Naive thymus-derived CD4-positive, alpha-beta T cell (primary cell): ENCODE measurements at regions of chr19 and their contacts with region 1.

Region 1: GRCh38 chr19:45405435-45406225 is 761 bp upstream of the PPP1R13L start:
- DNase-seq: peak; percentile 62 to 88 (median 81)
- ATAC-seq: peak; percentile 75
- H3K4me3 ChIP-seq: peak overlapping the region; percentile 77
- H3K4me3 Mint-ChIP-seq: peak overlapping the region; percentile 91 to 99 (median 97)
- H3K27ac ChIP-seq: peak overlapping the region; percentile 71
- H3K27ac Mint-ChIP-seq: peak overlapping the region; percentile 90 to 99 (median 94)
- H3K4me1 ChIP-seq: peaks cover 16 to 25% of the 10 kb centered on the region in 2 donors
- H3K4me1 Mint-ChIP-seq: peaks cover 28 to 53% (median 32%) of the 10 kb centered on the region in 7 donors
- H3K27me3 ChIP-seq: peaks cover 10 to 18% of the 10 kb centered on the region in 2 donors
- H3K27me3 Mint-ChIP-seq: peaks cover 15 to 27% (median 21%) of the 10 kb centered on the region in 5 donors

Region 2: DNA sequence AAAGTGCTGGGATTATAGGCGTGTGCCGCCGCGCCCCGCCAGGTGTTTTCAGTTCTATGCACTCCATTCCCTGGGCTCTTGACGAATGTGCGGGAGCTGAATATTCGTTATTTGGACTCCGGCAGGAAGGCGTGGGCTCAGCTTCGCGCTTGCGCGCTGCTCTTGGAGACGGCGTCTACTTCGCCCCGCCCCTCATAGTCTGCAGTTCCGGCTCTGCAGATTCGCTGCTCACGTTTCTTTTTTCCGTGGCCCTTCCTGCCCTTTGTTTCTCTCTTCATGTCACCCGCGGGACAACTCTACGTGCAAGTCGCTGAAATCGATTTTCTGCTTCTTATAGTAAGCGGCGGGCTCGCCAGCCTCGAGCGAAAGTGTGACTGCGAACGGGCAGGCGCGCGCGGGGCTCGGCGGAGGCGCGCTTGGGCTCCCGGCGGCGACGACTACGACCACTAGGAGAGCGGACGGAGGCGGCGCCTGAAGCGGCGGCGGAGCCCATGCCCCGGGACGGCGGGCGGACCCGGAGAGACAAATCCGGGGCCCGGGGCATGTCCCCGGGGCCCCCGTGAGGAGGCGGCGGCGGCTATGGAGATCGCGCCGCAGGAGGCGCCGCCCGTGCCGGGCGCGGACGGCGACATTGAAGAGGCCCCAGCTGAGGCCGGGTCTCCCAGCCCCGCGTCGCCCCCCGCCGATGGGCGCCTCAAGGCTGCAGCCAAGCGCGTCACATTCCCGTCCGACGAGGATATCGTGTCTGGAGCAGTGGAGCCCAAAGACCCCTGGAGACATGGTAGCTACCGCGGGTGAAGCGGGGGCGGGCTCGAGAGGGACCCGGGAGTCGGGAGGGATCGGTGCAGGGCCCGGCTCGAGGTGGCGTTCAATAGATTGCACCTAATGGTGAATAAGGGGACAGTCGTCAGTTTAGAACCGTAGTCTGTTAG is 312.6 kb before region 1 on chr19 and contains the start of gene PPP1R37:
- CTCF ChIA-PET with region 1: no interaction called
- POLR2A ChIA-PET with region 1: no interaction called
- intact Hi-C with region 1: loop called in 1 of 2 experiments (anchors 1 kb)
- DNase-seq: peak; percentile 81 to 97 (median 92)
- ATAC-seq: peak; percentile 85
- H3K4me3 ChIP-seq: peak within 1 kb of the TSS; percentile 75
- H3K4me3 Mint-ChIP-seq: peak within 1 kb of the TSS; percentile 87 to 99 (median 96)
- H3K27ac ChIP-seq: peak within 1 kb of the TSS; percentile 90
- H3K27ac Mint-ChIP-seq: peak within 1 kb of the TSS; percentile 96 to 100 (median 98)
- H3K4me1 ChIP-seq: peaks cover 33 to 46% of the 10 kb centered on the region in 2 donors
- H3K4me1 Mint-ChIP-seq: peaks cover 56 to 81% (median 60%) of the 10 kb centered on the region in 7 donors
- H3K27me3 ChIP-seq: no peaks in the 10 kb centered on the region
- H3K27me3 Mint-ChIP-seq: no peaks in the 10 kb centered on the region
- total RNA-seq, gene PPP1R37: 20.0 to 28.3 (median 21.9) TPM

Region 3: GRCh38 chr19:45423589-45424190 is 18.1 kb after region 1 on chr19 and contains the start of gene ERCC1:
- CTCF ChIA-PET with region 1: no interaction called
- POLR2A ChIA-PET with region 1: interaction called, 3 read pairs
- intact Hi-C with region 1: loop called (anchors 1 kb)
- DNase-seq: peak in 7 of 9 donors; percentile 25 to 83 (median 52)
- ATAC-seq: peak; percentile 71
- H3K4me3 ChIP-seq: peak within 1 kb of the TSS; percentile 72
- H3K4me3 Mint-ChIP-seq: peak within 1 kb of the TSS; percentile 88 to 100 (median 94)
- H3K27ac ChIP-seq: peak within 1 kb of the TSS; percentile 77
- H3K27ac Mint-ChIP-seq: peak within 1 kb of the TSS; percentile 83 to 97 (median 91)
- H3K4me1 ChIP-seq: peaks cover 24 to 28% of the 10 kb centered on the region in 2 donors
- H3K4me1 Mint-ChIP-seq: peaks cover 22 to 57% (median 50%) of the 10 kb centered on the region in 7 donors
- H3K27me3 ChIP-seq: peaks cover 0 to 3% of the 10 kb centered on the region in 2 donors
- H3K27me3 Mint-ChIP-seq: peaks cover 0 to 10% (median 3%) of the 10 kb centered on the region in 5 donors
- total RNA-seq, gene ERCC1: 45.1 to 88.2 (median 53.4) TPM

Region 4: DNA sequence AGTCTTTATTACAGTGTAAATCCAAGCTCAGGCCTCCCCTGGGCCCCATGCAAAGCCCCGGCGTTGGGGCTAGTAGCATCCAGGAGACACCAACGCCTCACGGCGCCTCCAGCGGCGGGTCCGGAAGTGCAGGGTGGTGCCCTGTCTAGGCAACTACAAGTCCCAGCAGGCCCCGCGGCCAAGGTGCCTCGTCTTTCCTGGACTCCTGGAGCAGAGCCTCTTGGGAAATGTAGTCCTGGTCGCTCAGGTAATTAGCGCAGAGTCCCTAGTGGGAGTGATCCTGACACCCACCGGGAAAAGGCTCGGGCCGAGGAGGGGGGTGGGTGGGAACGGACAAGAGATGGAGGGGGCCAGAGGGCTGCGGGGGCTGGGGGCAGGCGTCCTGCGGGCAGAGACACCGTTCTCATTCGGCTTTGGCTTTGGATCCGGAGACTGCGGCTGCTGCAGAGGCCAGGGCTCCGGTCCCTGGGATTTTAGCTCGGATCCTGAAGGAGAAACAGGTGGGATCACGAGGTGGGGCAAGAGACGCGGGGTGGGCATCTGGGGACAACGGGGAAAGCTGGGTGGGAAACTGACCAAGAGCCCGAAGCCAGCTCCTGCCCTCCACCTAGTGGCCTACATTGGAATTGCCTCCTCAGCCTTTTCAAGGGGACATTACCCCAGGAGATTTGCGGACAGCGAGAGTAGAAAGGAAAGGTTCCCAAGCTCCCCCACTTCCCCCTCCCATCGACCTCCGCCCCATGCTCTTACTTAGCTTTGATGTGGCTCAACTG is 79.9 kb after region 1 on chr19:
- CTCF ChIA-PET with region 1: interaction called, 4 read pairs
- POLR2A ChIA-PET with region 1: no interaction called
- intact Hi-C with region 1: loop called (anchors 1 kb)
- DNase-seq: peak; percentile 91 to 98 (median 95)
- ATAC-seq: peak; percentile 99
- H3K4me3 ChIP-seq: peak overlapping the region; percentile 85
- H3K4me3 Mint-ChIP-seq: peak overlapping the region; percentile 83 to 96 (median 90)
- H3K27ac ChIP-seq: peak overlapping the region; percentile 60
- H3K27ac Mint-ChIP-seq: peak overlapping the region in 8 of 9 donors; percentile 34 to 88 (median 82)
- H3K4me1 ChIP-seq: peaks cover 0 to 4% of the 10 kb centered on the region in 2 donors
- H3K4me1 Mint-ChIP-seq: peaks cover 0 to 13% (median 5%) of the 10 kb centered on the region in 7 donors
- H3K27me3 ChIP-seq: no peaks in the 10 kb centered on the region
- H3K27me3 Mint-ChIP-seq: peaks cover 0 to 7% (median 0%) of the 10 kb centered on the region in 5 donors

Region 5: GRCh38 chr19:45717166-45717982 is 311.7 kb after region 1 on chr19:
- CTCF ChIA-PET with region 1: no interaction called
- POLR2A ChIA-PET with region 1: interaction called, 3 read pairs
- intact Hi-C with region 1: loop called (anchors 1 kb)
- DNase-seq: peak; percentile 92 to 99 (median 98)
- ATAC-seq: peak; percentile 98
- H3K4me3 ChIP-seq: peak overlapping the region; percentile 80
- H3K4me3 Mint-ChIP-seq: peak overlapping the region; percentile 89 to 99 (median 95)
- H3K27ac ChIP-seq: peak overlapping the region; percentile 89
- H3K27ac Mint-ChIP-seq: peak overlapping the region; percentile 88 to 97 (median 96)
- H3K4me1 ChIP-seq: peaks cover 17 to 26% of the 10 kb centered on the region in 2 donors
- H3K4me1 Mint-ChIP-seq: peaks cover 26 to 55% (median 38%) of the 10 kb centered on the region in 7 donors
- H3K27me3 ChIP-seq: no peaks in the 10 kb centered on the region
- H3K27me3 Mint-ChIP-seq: no peaks in the 10 kb centered on the region

Region 6: GRCh38 chr19:45848922-45849321 is 443.3 kb after region 1 on chr19:
- CTCF ChIA-PET with region 1: no interaction called
- POLR2A ChIA-PET with region 1: no interaction called
- intact Hi-C with region 1: no loop called
- DNase-seq: no peak
- ATAC-seq: no peak
- H3K4me3 ChIP-seq: no peak overlapping the region
- H3K4me3 Mint-ChIP-seq: no peak overlapping the region
- H3K27ac ChIP-seq: no peak overlapping the region
- H3K27ac Mint-ChIP-seq: no peak overlapping the region
- H3K4me1 ChIP-seq: no peaks in the 10 kb centered on the region
- H3K4me1 Mint-ChIP-seq: peaks cover 0 to 8% (median 4%) of the 10 kb centered on the region in 7 donors
- H3K27me3 ChIP-seq: no peaks in the 10 kb centered on the region
- H3K27me3 Mint-ChIP-seq: no peaks in the 10 kb centered on the region

Region 7: GRCh38 chr19:45994989-45995714 is 589.5 kb after region 1 on chr19 and contains the start of gene CCDC61:
- CTCF ChIA-PET with region 1: no interaction called
- POLR2A ChIA-PET with region 1: no interaction called
- intact Hi-C with region 1: loop called (anchors 1 to 10 kb)
- DNase-seq: peak; percentile 82 to 100 (median 99)
- ATAC-seq: peak; percentile 97
- H3K4me3 ChIP-seq: peak within 1 kb of the TSS; percentile 73
- H3K4me3 Mint-ChIP-seq: peak within 1 kb of the TSS in 3 of 10 donors; percentile 9 to 64 (median 34)
- H3K27ac ChIP-seq: peak within 1 kb of the TSS; percentile 84
- H3K27ac Mint-ChIP-seq: peak within 1 kb of the TSS in 1 of 9 donors; percentile 72
- H3K4me1 ChIP-seq: peaks cover 5% of the 10 kb centered on the region in 2 donors
- H3K4me1 Mint-ChIP-seq: peaks cover 12 to 25% (median 18%) of the 10 kb centered on the region in 7 donors
- H3K27me3 ChIP-seq: no peaks in the 10 kb centered on the region
- H3K27me3 Mint-ChIP-seq: peaks cover 0 to 13% (median 5%) of the 10 kb centered on the region in 5 donors
- total RNA-seq, gene CCDC61: 15.5 to 35.8 (median 25.3) TPM